ENCODE measurements at regions of chr4 and their contacts with region 1.

Region 1: DNA sequence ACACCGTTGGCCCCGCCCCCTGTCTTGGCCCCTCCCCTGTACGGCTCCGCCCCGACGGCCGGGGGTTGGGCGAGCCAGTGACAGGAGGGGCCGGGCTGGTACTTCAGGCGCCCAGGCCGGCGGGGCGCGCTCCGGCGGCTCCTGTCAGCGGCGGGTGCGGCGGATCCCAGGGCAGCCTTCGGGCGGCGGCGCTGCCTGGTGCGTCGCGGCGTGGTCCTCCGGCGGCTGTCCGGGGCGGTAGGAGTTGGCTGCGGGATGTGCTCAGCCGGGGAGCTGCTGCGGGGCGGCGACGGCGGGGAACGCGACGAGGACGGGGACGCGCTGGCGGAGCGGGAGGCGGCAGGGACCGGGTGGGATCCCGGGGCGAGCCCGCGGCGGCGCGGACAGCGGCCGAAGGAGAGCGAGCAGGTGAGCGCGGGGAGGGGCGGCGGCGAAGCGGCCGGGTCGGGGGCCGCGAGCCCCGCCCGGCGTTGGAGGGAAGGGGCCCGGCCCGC is at the start of gene FAM241A:
- DNase-seq: peak; percentile 54
- ATAC-seq: peak; percentile 95
- H3K4me3 ChIP-seq: peak within 1 kb of the TSS; percentile 53 to 65
- H3K27ac ChIP-seq: peak within 1 kb of the TSS; percentile 68
- H3K4me1 ChIP-seq: peaks cover 4 to 13% of the 10 kb centered on the region in 2 experiments; a peak in 3 of 4 replicates
- H3K27me3 ChIP-seq: no peaks in the 10 kb centered on the region
- CTCF ChIP-seq: no peak
- POLR2A ChIP-seq: peak; percentile 78
- RAD21 ChIP-seq: no peak
- total RNA-seq, gene FAM241A: 4.5 TPM

Region 2: DNA sequence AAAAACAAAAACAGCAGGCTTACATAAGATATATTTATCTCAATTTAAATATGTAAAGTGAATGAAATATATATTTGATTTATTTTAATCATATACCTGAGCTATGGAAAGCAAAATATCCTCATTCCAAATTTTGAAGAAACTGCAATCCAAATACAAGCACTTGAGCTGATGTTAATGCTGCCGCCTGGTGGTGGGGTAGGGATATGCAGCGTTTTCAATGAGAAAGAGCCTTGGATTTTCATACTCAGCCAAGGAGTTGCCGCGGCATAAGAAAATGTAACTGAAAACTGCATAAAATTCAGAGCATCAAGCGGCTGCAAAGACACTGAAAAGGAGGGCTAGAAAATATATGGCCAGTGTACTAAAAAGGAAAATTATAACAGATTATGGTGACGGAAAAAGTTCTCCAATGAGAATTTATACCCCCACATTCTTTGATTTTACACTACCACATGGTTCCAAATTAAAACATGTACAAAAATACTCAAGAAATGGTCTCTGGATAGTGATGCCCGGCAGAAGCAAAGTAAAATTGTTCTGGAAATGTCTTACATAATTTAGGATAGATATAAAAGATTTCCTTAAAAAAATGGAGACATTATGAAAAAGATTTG is 862.2 kb before region 1 on chr4:
- CTCF ChIA-PET with region 1: no interaction called
- POLR2A ChIA-PET with region 1: no interaction called
- RAD21 ChIA-PET with region 1: no interaction called
- intact Hi-C with region 1: no loop called
- DNase-seq: peak; percentile 65
- ATAC-seq: peak; percentile 67
- H3K4me3 ChIP-seq: peak overlapping the region; percentile 25 to 34; a peak in 3 of 4 replicates
- H3K27ac ChIP-seq: no peak overlapping the region
- H3K4me1 ChIP-seq: no peaks in the 10 kb centered on the region
- H3K27me3 ChIP-seq: no peaks in the 10 kb centered on the region
- CTCF ChIP-seq: peak; percentile 71 to 89 (median 81)
- POLR2A ChIP-seq: no peak
- RAD21 ChIP-seq: peak; percentile 74

Region 3: DNA sequence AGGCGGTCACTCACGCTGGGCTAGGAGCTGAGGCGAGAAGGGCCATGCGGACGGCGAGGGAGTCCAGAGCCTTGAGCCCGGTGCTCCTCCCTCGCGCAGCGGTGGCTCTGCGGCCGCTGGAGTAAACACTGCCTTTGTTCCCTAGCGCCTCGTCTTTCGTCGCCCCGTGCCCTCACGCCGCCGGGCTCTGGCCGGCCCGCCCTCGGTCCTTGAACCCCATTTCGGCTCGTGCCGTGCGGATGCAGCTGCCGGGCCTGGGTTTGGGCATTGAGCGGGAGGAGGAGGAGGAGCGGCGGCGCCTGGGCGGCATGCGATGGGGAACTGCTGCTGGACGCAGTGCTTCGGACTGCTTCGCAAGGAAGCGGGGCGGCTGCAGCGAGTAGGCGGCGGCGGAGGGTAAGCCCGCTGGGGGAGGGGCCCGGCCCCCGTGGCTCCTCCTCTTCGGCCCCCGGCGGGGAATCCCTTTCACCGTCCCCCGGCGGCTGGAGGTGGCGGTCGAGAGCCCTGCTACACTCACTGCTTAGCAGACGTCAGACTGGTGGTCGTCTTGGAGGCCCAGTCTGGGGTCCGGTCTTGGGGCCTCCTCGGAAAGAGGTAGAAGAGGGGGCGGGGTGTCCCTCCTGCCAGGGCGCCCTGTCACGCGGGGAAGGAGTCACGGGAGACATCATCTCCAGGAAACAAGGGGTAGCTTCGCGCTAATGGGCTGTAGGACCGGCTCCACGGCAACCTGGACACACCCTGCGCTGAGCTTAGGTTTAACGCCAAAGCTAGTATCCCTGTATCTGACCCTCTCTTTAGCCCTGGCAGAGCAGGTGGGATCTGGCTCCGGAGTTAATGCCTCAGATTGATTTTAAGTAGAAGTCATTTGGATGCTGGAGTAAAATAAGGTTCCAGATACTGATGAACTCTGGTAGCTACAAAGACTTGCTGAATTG is 86.7 kb after region 1 on chr4 and contains the start of gene AP1AR:
- CTCF ChIA-PET with region 1: no interaction called
- POLR2A ChIA-PET with region 1: interaction called, 3 read pairs
- RAD21 ChIA-PET with region 1: no interaction called
- intact Hi-C with region 1: loop called (anchors 5 kb)
- DNase-seq: peak; percentile 44
- ATAC-seq: peak; percentile 76
- H3K4me3 ChIP-seq: peak within 1 kb of the TSS; percentile 82 to 89
- H3K27ac ChIP-seq: peak within 1 kb of the TSS; percentile 79
- H3K4me1 ChIP-seq: peaks cover 18 to 38% of the 10 kb centered on the region in 2 experiments; a peak in 3 of 4 replicates
- H3K27me3 ChIP-seq: no peaks in the 10 kb centered on the region
- CTCF ChIP-seq: peak in 2 of 3 experiments; percentile 38 to 40; a peak in 3 of 6 replicates
- POLR2A ChIP-seq: peak; percentile 65
- RAD21 ChIP-seq: no peak
- total RNA-seq, gene AP1AR: 56.7 TPM

Region 4: DNA sequence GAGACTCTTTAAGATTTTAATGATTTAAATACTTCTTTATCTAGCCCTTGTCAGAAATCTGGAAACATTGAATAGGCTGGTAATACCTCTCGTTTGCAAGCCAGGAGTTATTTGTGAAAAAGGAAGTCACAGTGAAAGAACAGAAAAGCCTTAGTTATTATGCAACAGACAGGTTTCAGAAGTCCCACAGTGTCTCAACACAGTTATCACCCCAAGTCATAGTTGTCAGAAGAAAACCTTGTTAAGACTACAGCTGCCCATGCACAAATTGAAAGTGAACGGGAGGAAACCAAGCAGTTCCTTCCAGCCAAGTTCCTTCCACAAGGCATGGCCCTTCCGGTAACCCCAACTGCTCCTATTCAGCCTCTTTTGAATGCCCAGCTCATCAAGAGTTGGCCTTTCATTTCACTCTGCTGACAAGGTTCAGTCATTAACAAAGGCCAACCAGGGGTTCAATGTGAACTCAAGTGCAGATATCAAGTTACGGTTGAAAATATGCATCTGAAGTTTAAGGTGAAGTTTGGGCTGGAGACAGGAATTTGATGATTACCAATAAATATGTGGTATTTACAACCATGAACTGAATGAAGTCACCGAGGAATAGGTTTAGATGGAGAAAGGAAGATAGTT is 167.4 kb after region 1 on chr4:
- CTCF ChIA-PET with region 1: no interaction called
- POLR2A ChIA-PET with region 1: no interaction called
- RAD21 ChIA-PET with region 1: no interaction called
- intact Hi-C with region 1: no loop called
- DNase-seq: no peak
- ATAC-seq: no peak
- H3K4me3 ChIP-seq: no peak overlapping the region
- H3K27ac ChIP-seq: no peak overlapping the region
- H3K4me1 ChIP-seq: no peaks in the 10 kb centered on the region; a peak in 1 of 4 replicates
- H3K27me3 ChIP-seq: no peaks in the 10 kb centered on the region
- CTCF ChIP-seq: no peak
- POLR2A ChIP-seq: no peak
- RAD21 ChIP-seq: no peak